ENCODE measurements at regions of chr17 and their contacts with region 1.

Region 1: DNA sequence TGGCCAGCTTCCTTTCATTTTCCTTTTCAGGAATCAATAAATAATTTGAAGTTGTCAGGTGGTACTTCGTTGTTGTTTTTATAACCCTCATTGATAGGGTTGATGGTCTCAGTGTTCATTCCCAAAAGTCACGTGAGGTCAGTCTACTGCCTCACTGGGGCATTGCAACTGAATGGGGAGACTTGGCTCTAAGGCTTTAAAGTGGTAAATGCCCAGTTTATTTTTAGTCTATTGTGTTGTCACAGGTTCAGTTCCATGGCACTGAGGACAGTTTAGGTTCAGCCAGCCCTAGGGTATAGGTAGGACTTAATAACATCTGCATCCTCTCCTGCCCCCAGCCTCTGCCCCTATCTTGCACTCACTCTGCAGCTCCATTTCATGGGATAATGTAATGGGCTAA is 33.5 kb upstream of the NGFR start:
- DNase-seq: no peak
- ATAC-seq: no peak
- H3K4me3 ChIP-seq: no peak overlapping the region
- H3K27ac ChIP-seq: no peak overlapping the region
- H3K4me1 ChIP-seq: no peaks in the 10 kb centered on the region
- H3K27me3 ChIP-seq: peaks cover 12% of the 10 kb centered on the region
- CTCF ChIP-seq: no peak

Region 2: DNA sequence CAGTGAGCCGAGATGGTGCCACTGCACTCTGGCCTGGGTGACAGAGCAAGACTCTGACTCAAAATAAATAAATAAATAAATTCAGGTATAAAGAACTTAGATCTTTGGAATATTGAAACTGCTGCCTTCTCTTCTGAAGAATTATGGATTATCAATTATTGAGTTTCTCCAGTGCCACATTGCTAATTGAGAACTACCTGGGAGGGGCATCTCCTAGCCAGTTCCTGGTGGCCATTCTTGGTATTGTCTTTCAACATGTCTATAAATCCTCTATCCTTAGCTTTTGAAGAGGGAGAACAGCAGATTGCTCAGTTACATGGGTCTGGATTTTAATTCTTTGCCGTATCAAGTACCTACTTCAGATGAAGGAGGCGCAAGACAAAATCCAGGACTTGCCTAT is 601.5 kb before region 1 on chr17:
- CTCF ChIA-PET with region 1: no interaction called
- POLR2A ChIA-PET with region 1: no interaction called
- in situ Hi-C with region 1: no loop called
- intact Hi-C with region 1: no loop called
- DNase-seq: no peak
- ATAC-seq: no peak; the same call in 1 of the 2 replicates
- H3K4me3 ChIP-seq: no peak overlapping the region
- H3K27ac ChIP-seq: no peak overlapping the region
- H3K4me1 ChIP-seq: no peaks in the 10 kb centered on the region
- H3K27me3 ChIP-seq: no peaks in the 10 kb centered on the region
- CTCF ChIP-seq: no peak

Region 3: DNA sequence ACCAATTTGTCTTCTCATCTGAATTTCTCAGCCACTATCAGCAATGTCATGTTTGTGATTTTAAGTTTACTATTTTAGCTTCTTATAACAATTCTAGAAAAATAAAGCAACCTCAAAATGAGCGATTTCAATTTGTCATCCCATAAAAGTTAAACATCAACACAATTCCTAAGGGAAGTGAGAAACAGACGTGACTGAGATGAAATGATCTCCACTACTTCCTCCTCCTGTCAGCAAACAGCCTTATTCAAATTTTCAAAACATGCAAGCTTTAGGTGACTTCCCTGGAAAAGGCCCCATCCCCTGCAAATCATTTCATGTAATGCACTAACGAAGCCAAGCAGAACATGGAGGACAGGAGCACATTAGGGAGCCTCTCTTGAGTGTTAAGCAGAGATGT is 164.4 kb before region 1 on chr17:
- CTCF ChIA-PET with region 1: no interaction called
- POLR2A ChIA-PET with region 1: no interaction called
- in situ Hi-C with region 1: no loop called
- intact Hi-C with region 1: no loop called
- DNase-seq: no peak
- ATAC-seq: no peak
- H3K4me3 ChIP-seq: no peak overlapping the region
- H3K27ac ChIP-seq: no peak overlapping the region
- H3K4me1 ChIP-seq: no peaks in the 10 kb centered on the region
- H3K27me3 ChIP-seq: no peaks in the 10 kb centered on the region
- CTCF ChIP-seq: no peak

Region 4: GRCh38 chr17:49434821-49435670 is 26.5 kb before region 1 on chr17:
- CTCF ChIA-PET with region 1: no interaction called
- POLR2A ChIA-PET with region 1: no interaction called
- in situ Hi-C with region 1: no loop called
- intact Hi-C with region 1: no loop called
- DNase-seq: no peak
- ATAC-seq: peak; percentile 88
- H3K4me3 ChIP-seq: no peak overlapping the region
- H3K27ac ChIP-seq: no peak overlapping the region
- H3K4me1 ChIP-seq: no peaks in the 10 kb centered on the region
- H3K27me3 ChIP-seq: peaks cover 12% of the 10 kb centered on the region
- CTCF ChIP-seq: peak; percentile 92

Region 5: DNA sequence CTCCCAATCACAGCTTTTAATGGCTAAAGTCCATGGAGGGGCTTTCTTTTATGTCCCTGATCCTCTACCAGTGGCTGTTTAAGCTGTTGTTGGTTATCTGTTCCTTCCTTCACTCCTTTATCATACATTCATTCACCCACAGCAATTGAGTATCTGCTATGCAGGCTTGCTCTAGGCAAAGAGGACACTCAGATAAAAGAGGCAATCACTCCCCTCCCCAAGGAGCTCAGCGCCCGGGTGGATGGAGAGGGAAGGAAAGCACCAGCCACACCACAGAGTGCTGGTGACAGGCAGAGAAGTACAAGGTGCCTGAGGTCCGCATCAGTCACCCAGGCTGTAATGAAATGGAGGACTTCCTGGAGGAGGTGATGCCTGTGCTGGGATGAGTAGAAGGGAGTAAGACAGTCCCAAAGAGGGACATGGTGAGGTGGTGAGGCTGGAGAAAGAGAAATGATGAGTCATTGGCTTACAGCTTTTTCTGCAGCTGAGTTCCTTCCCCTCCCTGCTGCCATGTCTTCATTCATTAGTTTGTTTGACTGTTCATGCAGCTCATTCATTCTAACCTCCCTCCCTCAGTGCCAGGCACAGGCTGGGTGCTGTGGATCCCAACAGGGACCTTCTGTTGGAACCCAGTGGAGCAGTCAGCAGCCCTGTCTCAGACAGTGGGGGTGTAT is 20.7 kb after region 1 on chr17:
- CTCF ChIA-PET with region 1: no interaction called
- POLR2A ChIA-PET with region 1: interaction called, 11 read pairs
- in situ Hi-C with region 1: no loop called
- intact Hi-C with region 1: no loop called
- DNase-seq: no peak
- ATAC-seq: no peak
- H3K4me3 ChIP-seq: no peak overlapping the region
- H3K27ac ChIP-seq: no peak overlapping the region
- H3K4me1 ChIP-seq: no peaks in the 10 kb centered on the region
- H3K27me3 ChIP-seq: peaks cover 9% of the 10 kb centered on the region; the same call in 1 of the 2 replicates
- CTCF ChIP-seq: no peak

Region 6: GRCh38 chr17:49959183-49959935 is 497.8 kb after region 1 on chr17:
- CTCF ChIA-PET with region 1: no interaction called
- POLR2A ChIA-PET with region 1: no interaction called
- in situ Hi-C with region 1: no loop called
- intact Hi-C with region 1: loop called (anchors 5 kb)
- DNase-seq: no peak
- ATAC-seq: peak; percentile 39; the same call in 1 of the 2 replicates
- H3K4me3 ChIP-seq: no peak overlapping the region
- H3K27ac ChIP-seq: no peak overlapping the region
- H3K4me1 ChIP-seq: no peaks in the 10 kb centered on the region
- H3K27me3 ChIP-seq: no peaks in the 10 kb centered on the region
- CTCF ChIP-seq: no peak